ENCODE measurements at regions of chr6 and their contacts with region 1.

Region 1: GRCh38 chr6:127554435-127555006 is 22.5 kb upstream of the C6orf58 start:
- H3K4me3 ChIP-seq: no peak overlapping the region
- H3K27ac ChIP-seq: no peak overlapping the region
- H3K4me1 ChIP-seq: no peaks in the 10 kb centered on the region
- CTCF ChIP-seq: peak; percentile 29; the same call in 1 of the 2 replicates

Region 2: GRCh38 chr6:127435626-127436220 is 118.8 kb before region 1 on chr6:
- CTCF ChIA-PET with region 1: no interaction called
- POLR2A ChIA-PET with region 1: no interaction called
- H3K4me3 ChIP-seq: no peak overlapping the region
- H3K27ac ChIP-seq: no peak overlapping the region
- H3K4me1 ChIP-seq: no peaks in the 10 kb centered on the region
- CTCF ChIP-seq: no peak

Region 3: DNA sequence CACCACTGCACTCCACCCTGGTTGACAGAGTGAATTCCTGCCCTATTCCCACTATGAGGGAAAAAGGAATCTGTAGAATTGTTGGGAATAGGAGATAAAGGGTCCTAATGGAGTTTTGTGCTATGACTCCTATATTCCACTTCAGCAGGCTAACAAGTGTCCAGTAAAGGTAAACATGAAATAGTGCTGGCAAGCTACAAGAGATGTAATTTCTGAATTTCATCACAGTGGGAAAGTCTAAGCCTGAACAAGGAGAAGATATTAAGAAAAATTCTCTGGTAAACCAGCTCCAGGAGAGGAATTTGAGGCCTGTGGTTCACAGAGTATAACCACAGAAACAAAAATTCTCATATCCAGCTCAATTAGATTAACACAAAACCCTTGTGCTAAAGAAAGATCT is 12.1 kb after region 1 on chr6:
- CTCF ChIA-PET with region 1: interaction called, 19 read pairs
- POLR2A ChIA-PET with region 1: no interaction called
- H3K4me3 ChIP-seq: no peak overlapping the region
- H3K27ac ChIP-seq: no peak overlapping the region
- H3K4me1 ChIP-seq: no peaks in the 10 kb centered on the region
- CTCF ChIP-seq: no peak

Region 4: DNA sequence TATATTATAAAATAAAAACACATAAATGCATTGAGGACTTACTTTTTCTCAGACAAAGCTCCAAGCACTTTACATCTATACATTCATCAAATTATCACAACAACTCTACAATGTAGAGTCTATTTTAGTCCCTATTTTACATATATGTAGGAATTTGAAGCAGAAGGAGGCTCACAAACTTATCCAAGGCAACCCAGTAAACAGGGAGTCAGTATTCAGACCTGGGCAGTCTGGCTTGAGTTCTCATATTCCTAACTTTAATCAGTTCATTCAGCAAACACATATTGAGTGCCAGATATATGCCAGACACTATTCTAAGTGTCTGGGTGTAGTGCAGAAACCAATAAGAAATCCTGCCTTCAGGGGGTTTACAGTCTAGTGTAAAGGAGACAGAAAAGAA is 151.7 kb after region 1 on chr6:
- CTCF ChIA-PET with region 1: no interaction called
- POLR2A ChIA-PET with region 1: no interaction called
- H3K4me3 ChIP-seq: no peak overlapping the region
- H3K27ac ChIP-seq: no peak overlapping the region
- H3K4me1 ChIP-seq: no peaks in the 10 kb centered on the region
- CTCF ChIP-seq: no peak

Region 5: DNA sequence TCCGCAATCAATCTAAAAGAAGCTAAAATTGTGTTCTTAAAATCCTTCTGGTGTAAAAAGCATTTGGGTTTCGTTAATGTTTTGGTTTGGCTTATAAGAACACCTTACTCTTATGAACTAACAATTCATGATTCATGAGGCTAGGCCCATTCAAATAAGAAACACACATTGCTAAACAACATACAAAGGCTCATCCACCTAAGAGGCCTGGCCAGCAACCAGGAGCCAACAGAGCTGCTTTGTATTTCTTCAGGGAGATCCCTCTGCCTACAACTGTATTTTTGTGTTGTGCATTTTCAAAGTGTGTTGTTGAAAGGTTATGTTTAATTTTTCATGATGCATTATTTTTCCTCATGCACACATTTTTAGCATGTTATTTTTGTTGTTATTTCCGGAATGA is 867.3 kb after region 1 on chr6:
- CTCF ChIA-PET with region 1: no interaction called
- POLR2A ChIA-PET with region 1: no interaction called
- H3K4me3 ChIP-seq: no peak overlapping the region
- H3K27ac ChIP-seq: no peak overlapping the region
- H3K4me1 ChIP-seq: no peaks in the 10 kb centered on the region
- CTCF ChIP-seq: no peak